ENCODE measurements at regions of chr1 and their contacts with region 1.

Region 1: GRCh38 chr1:53959664-53960250 is 13.6 kb downstream of the LRRC42 start:
- DNase-seq: peak; percentile 15
- ATAC-seq: peak; percentile 68
- H3K4me3 Mint-ChIP-seq: no peak overlapping the region
- H3K27ac Mint-ChIP-seq: no peak overlapping the region
- H3K4me1 Mint-ChIP-seq: peaks cover 7% of the 10 kb centered on the region
- H3K27me3 Mint-ChIP-seq: no peaks in the 10 kb centered on the region
- CTCF ChIP-seq: peak; percentile 78

Region 2: DNA sequence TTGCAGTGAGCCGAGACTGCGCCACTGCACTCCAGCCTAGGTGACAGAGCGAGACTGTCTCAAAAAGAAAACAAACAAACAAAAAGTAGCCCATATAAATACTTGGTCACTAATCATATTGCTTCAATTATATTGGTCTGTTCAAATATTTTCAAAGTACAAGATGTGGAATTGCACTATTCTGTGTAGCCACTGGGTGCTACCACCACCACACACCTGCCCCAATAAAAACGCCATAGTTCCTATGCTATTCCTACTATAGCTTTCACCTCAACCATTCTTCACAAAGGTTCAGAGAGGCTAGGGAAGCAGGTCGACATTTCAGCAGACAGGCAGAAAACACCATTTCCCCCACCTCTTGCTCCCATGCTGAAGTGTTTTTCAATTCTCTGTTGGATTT is 138.4 kb before region 1 on chr1:
- CTCF ChIA-PET with region 1: no interaction called
- POLR2A ChIA-PET with region 1: no interaction called
- intact Hi-C with region 1: no loop called
- DNase-seq: no peak
- ATAC-seq: no peak
- H3K4me3 Mint-ChIP-seq: no peak overlapping the region
- H3K27ac Mint-ChIP-seq: no peak overlapping the region
- H3K4me1 Mint-ChIP-seq: no peaks in the 10 kb centered on the region
- H3K27me3 Mint-ChIP-seq: no peaks in the 10 kb centered on the region
- CTCF ChIP-seq: no peak

Region 3: GRCh38 chr1:53847980-53848379 is 111.8 kb before region 1 on chr1:
- CTCF ChIA-PET with region 1: interaction called, 18 read pairs
- POLR2A ChIA-PET with region 1: no interaction called
- intact Hi-C with region 1: no loop called
- DNase-seq: no peak
- ATAC-seq: no peak
- H3K4me3 Mint-ChIP-seq: no peak overlapping the region
- H3K27ac Mint-ChIP-seq: no peak overlapping the region
- H3K4me1 Mint-ChIP-seq: no peaks in the 10 kb centered on the region
- H3K27me3 Mint-ChIP-seq: no peaks in the 10 kb centered on the region
- CTCF ChIP-seq: no peak

Region 4: DNA sequence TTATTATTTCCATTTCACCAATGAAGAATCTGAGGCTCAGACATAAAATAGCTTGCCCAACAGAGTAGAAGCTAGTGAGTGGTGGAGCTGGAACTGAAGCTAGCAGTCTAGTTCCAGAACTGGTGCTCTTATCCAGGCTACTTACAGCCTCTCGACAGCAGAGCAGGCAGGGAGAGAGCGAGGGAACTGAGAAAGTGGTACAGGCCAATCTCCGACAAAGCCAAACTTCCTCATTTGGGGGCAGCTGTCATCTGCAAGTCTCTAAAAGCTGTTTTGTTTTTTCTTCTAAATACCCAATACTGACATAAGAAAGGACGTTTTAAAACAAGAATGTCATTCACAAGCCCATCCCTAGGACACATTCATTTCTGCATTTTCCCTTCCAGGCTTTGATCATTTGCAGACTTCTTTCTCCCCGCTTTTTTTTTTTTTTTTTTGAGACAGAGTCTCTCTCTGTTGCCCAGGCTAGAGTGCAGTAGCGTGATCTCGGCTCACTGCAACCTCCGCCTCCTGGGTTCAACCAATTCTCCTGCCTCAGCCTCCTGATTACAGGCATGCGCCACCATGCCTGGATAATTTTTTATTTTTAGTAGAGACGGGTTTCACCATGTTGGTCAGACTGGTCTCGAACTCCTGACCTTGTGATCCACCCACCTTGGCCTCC is 90.2 kb before region 1 on chr1:
- CTCF ChIA-PET with region 1: interaction called, 139 read pairs
- POLR2A ChIA-PET with region 1: no interaction called
- intact Hi-C with region 1: loop called (anchors 5 kb)
- DNase-seq: no peak
- ATAC-seq: no peak
- H3K4me3 Mint-ChIP-seq: no peak overlapping the region
- H3K27ac Mint-ChIP-seq: no peak overlapping the region
- H3K4me1 Mint-ChIP-seq: no peaks in the 10 kb centered on the region
- H3K27me3 Mint-ChIP-seq: no peaks in the 10 kb centered on the region
- CTCF ChIP-seq: no peak

Region 5: DNA sequence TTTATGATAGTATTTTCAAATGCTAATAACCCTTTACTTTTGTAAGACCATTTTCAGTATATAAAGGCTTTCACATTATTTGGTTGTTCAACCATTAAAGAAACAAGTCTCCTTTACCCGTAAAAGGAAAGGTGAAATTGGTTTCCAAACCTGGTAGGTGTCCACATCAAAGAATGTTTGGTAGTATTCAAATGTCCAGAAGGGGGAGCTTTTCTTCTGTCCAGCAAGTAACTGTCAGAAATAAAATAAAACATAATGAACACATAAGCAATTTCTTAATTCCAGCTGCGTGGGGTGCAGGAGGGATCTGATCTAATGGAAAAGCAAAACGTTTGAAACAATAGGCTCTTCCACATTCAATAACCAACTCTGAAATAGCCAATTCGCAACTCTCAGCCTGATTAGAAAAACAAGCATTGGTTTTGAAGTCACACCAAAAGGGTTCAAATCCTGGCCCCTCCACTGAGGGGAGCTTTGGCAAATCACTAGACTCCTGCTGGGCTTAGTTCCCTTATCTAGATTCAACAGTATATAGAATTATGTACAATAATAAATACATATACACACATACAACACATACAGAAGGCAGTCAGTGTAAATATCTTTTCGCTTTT is 81.2 kb before region 1 on chr1:
- CTCF ChIA-PET with region 1: interaction called, 50 read pairs
- POLR2A ChIA-PET with region 1: no interaction called
- intact Hi-C with region 1: no loop called
- DNase-seq: no peak
- ATAC-seq: no peak
- H3K4me3 Mint-ChIP-seq: no peak overlapping the region
- H3K27ac Mint-ChIP-seq: no peak overlapping the region
- H3K4me1 Mint-ChIP-seq: peaks cover 2% of the 10 kb centered on the region
- H3K27me3 Mint-ChIP-seq: no peaks in the 10 kb centered on the region
- CTCF ChIP-seq: no peak

Region 6: GRCh38 chr1:53889304-53890298 is 70.2 kb before region 1 on chr1 and contains the start of gene YIPF1:
- CTCF ChIA-PET with region 1: interaction called, 14 read pairs
- POLR2A ChIA-PET with region 1: interaction called, 3 read pairs
- intact Hi-C with region 1: no loop called
- DNase-seq: peak; percentile 89
- ATAC-seq: peak; percentile 92
- H3K4me3 Mint-ChIP-seq: peak within 1 kb of the TSS; percentile 96
- H3K27ac Mint-ChIP-seq: peak within 1 kb of the TSS; percentile 99
- H3K4me1 Mint-ChIP-seq: peaks cover 36% of the 10 kb centered on the region
- H3K27me3 Mint-ChIP-seq: no peaks in the 10 kb centered on the region
- CTCF ChIP-seq: no peak
- total RNA-seq, gene YIPF1: 13.2 to 15.6 TPM

Region 7: GRCh38 chr1:53945433-53946251 is 14.1 kb before region 1 on chr1 and contains the start of gene IFT25:
- CTCF ChIA-PET with region 1: interaction called, 55 read pairs
- POLR2A ChIA-PET with region 1: interaction called, 6 read pairs
- intact Hi-C with region 1: no loop called
- DNase-seq: peak; percentile 99
- ATAC-seq: peak; percentile 86
- H3K4me3 Mint-ChIP-seq: peak within 1 kb of the TSS; percentile 93
- H3K27ac Mint-ChIP-seq: peak within 1 kb of the TSS; percentile 88
- H3K4me1 Mint-ChIP-seq: peaks cover 53% of the 10 kb centered on the region
- H3K27me3 Mint-ChIP-seq: no peaks in the 10 kb centered on the region
- CTCF ChIP-seq: no peak
- total RNA-seq, gene IFT25: 60.5 to 63.5 TPM

Region 8: DNA sequence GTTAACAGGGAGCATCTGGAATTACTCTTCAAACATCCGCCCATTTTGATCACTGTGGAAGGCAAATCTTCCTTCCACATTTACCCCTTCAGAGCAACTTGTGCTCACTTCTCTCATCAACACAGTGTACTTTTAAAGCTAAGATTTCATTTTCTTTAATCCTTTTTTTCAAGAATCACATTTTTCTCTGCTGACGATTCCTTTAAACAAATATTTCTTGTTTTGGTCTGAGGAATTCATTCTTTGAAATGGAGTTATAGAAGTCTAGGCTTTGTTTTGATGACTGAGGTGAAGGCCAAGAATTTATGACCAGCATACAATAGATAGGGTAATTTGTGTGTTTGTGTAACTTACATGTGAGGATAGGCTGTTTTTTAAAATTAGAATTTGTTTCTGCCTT is 12.0 kb after region 1 on chr1:
- CTCF ChIA-PET with region 1: interaction called, 25 read pairs
- POLR2A ChIA-PET with region 1: no interaction called
- intact Hi-C with region 1: no loop called
- DNase-seq: no peak
- ATAC-seq: no peak
- H3K4me3 Mint-ChIP-seq: no peak overlapping the region
- H3K27ac Mint-ChIP-seq: no peak overlapping the region
- H3K4me1 Mint-ChIP-seq: peaks cover 3% of the 10 kb centered on the region
- H3K27me3 Mint-ChIP-seq: no peaks in the 10 kb centered on the region
- CTCF ChIP-seq: no peak

Region 9: DNA sequence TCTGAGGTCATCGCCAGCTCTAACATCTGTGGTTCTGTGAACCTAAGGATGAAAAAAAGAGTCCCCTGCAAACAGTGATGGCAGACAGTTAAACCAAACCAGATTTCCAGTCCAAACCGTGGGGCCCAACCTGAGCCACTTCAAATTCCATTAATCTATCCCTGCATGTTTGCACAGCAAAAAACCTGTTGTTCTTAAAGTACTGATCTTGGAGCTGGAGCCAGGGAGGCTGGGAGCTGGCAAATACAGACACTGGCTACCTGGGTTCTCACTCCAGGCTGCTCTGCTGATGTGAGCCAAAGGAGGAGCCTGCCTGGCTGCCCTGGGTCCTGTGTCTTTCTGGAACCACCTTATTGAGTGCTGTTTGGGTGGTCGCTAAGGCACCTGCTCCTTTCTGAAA is 41.8 kb after region 1 on chr1:
- CTCF ChIA-PET with region 1: no interaction called
- POLR2A ChIA-PET with region 1: no interaction called
- intact Hi-C with region 1: no loop called
- DNase-seq: no peak
- ATAC-seq: no peak
- H3K4me3 Mint-ChIP-seq: no peak overlapping the region
- H3K27ac Mint-ChIP-seq: no peak overlapping the region
- H3K4me1 Mint-ChIP-seq: no peaks in the 10 kb centered on the region
- H3K27me3 Mint-ChIP-seq: no peaks in the 10 kb centered on the region
- CTCF ChIP-seq: no peak

Measured in activated CD8-positive, alpha-beta T cell treated with anti-CD3 and anti-CD28 coated beads for 36 hours (primary cell).